ENCODE measurements at regions of chr5 and their contacts with region 1.

Region 1: GRCh38 chr5:172973127-172973916 is 10.2 kb upstream of the ATP6V0E1 start:
- DNase-seq: no peak
- H3K4me3 ChIP-seq: no peak overlapping the region
- H3K27ac ChIP-seq: peak overlapping the region; percentile 39
- H3K27me3 ChIP-seq: no peaks in the 10 kb centered on the region
- CTCF ChIP-seq: no peak

Region 2: DNA sequence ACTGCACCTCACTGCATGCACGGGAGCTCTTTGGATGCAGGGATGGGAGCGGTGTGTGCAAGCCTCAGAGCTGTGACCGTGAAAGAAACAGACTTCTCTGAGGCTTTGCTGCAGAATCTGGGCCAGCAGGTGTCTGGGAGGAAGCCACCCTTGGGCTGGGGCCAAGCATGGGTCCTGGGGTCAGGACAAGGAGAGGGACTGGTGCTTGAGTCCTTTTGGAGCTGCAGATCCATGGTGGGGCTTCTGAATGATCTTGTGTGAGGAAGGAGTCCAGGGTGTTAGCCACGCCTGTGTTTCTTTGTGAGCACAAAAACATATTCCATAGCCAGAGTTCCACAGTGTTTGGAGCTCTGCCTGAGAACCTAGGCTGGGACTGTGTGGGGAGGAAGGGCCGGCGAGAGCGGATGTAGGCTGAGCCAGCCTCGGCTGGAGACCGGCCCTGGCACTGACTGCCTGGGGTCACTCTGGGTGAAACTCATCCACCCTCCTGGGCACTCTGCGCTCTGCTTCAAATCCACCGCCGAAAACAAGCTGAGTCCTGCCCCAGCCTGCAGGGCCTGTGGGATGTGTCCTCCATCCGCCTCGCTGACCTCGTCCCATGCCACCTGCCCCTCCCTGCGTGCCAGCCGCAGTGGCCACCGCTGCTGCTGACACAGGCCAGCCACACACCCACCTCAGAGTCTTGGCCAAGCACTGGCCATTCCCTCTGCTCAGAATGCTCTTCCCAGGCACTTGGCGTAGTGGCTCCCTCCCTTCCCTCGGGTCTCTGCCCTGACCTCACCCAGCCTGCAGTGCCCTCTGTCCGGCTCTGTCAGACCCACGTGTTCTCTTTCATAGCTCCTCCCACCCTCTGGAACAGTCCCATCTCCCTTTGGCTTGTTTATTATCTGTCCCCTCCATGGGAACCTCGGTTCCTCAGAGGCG is 112.5 kb before region 1 on chr5:
- CTCF ChIA-PET with region 1: no interaction called
- POLR2A ChIA-PET with region 1: no interaction called
- DNase-seq: no peak
- H3K4me3 ChIP-seq: no peak overlapping the region
- H3K27ac ChIP-seq: peak overlapping the region; percentile 22
- H3K27me3 ChIP-seq: no peaks in the 10 kb centered on the region
- CTCF ChIP-seq: no peak

Region 3: GRCh38 chr5:172939071-172939470 is 34.3 kb before region 1 on chr5:
- CTCF ChIA-PET with region 1: no interaction called
- POLR2A ChIA-PET with region 1: no interaction called
- DNase-seq: no peak
- H3K4me3 ChIP-seq: no peak overlapping the region
- H3K27ac ChIP-seq: no peak overlapping the region
- H3K27me3 ChIP-seq: no peaks in the 10 kb centered on the region
- CTCF ChIP-seq: peak; percentile 47

Region 4: DNA sequence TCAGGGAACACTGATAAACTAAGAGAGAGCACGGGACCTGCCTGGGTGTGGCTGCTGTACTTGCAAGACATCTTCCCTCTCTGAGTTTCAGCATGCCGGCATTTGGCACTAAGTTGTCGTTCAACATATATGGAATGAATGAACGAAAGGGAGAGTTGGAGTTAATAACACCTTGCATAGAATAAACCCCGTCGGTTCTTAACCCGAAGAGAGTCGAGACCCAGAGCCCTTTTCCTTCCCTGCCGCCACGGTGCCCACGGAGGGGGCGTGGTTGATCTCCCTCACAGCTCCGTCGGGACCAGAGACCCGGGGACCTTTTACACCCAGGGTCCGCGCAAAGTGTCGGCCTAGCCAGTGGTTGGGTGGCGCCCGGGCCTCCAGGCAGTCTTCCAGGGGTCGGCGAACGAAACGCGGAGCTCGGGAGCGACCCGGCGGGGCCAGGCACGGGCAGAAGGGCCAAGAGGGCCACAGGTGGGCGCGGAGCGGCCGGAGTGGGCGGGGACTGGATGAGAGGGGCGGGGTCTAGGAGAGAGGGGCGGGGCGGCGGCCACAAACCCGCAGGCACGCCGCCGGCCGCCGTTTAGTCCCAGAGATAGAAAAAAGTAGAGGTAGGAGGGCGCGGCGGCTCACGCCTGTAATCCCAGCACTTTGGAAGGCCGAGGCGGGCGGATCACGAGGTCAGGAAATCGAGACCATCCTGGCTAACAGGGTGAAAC is 14.8 kb before region 1 on chr5:
- CTCF ChIA-PET with region 1: interaction called, 8 read pairs
- POLR2A ChIA-PET with region 1: interaction called, 10 read pairs
- DNase-seq: no peak
- H3K4me3 ChIP-seq: peak overlapping the region; percentile 56
- H3K27ac ChIP-seq: peak overlapping the region; percentile 86
- H3K27me3 ChIP-seq: no peaks in the 10 kb centered on the region
- CTCF ChIP-seq: no peak

Region 5: DNA sequence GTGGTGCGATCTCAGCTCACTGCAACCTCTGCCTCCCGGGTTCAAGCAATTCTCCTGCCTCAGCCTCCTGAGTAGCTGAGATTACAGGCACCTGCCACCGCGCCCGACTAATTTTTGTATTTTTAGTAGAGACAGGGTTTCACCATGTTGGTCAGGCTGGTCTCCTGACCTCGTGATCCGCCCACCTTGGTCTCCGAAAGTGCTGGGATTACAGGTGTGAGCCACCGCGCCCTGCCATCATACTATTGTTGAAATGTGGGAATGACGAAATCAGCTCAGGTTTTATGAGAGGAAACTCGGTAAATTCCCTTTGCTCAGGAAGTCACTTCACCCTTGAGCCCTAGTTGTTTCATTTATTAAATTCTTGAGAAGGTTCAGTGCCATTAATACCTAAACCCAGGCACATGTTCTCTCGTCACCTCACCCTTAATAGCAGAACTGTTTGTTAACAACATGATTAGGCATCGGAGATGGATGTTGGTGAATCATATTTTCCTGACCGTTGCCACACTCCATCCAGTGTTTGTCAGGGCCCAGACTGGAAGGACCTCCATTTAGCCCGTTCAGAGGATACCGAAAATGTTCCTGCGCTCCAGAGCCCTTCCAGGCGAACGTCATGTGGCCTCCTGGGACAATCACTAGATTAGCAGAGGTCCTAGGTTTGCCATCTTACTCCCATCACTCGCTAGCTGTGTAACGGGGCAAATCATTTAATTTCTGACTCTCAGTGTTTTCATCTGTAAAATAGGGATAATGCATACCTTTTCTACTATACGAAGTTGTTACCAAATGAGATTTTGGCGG is 62.8 kb after region 1 on chr5:
- CTCF ChIA-PET with region 1: no interaction called
- POLR2A ChIA-PET with region 1: no interaction called
- DNase-seq: no peak
- H3K4me3 ChIP-seq: no peak overlapping the region
- H3K27ac ChIP-seq: peak overlapping the region; percentile 42
- H3K27me3 ChIP-seq: no peaks in the 10 kb centered on the region
- CTCF ChIP-seq: no peak

Region 6: GRCh38 chr5:173144200-173145176 is 171.2 kb after region 1 on chr5 and contains the start of gene BNIP1:
- CTCF ChIA-PET with region 1: interaction called, 12 read pairs
- POLR2A ChIA-PET with region 1: no interaction called
- DNase-seq: peak; percentile 91
- H3K4me3 ChIP-seq: peak within 1 kb of the TSS; percentile 100
- H3K27ac ChIP-seq: peak within 1 kb of the TSS; percentile 69
- H3K27me3 ChIP-seq: no peaks in the 10 kb centered on the region
- CTCF ChIP-seq: peak; percentile 99
- polyA plus RNA-seq, gene BNIP1: 23.5 TPM in 2 replicates